ENCODE measurements at regions of chr12 and their contacts with region 1.

Region 1: DNA sequence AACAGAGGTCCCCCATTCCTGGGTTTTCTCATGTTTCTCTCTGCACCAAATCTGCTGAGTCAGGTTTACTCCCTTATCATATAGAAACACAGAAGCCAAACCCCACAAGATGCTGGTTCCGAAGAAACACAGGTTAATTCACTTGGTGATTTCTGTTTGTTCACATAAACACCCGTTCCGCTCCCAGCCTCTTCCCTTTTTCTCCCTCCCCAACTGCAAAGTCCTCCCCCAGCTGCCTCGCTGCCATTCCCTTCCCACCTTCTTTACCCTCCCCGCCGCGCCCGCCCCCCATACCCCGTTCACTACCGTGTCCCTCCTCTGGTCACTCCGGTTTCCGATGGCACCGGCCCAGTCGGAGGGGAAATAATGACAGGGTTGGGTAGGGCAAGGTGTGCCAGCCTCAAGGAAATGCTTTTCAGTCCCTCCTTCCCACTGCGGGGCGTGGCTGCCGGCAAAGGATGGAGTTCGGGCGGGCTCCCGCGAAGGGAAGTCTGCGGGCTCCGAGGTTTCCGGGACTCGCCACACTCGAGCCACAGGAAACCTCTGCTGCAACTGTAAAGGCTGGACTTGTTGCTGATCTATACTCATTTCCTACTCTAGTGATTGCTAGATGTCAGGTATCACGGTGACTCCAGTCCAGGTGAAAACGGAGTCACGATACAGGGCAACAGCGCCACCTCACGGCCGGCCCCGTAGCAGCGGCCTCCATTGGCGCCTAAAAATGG is at the start of gene STYK1:
- DNase-seq: peak; percentile 91
- H3K4me3 Mint-ChIP-seq: peak within 1 kb of the TSS; percentile 81
- H3K27ac Mint-ChIP-seq: peak within 1 kb of the TSS; percentile 70
- H3K4me1 Mint-ChIP-seq: peaks cover 35% of the 10 kb centered on the region
- H3K27me3 Mint-ChIP-seq: no peaks in the 10 kb centered on the region
- CTCF ChIP-seq: peak; percentile 93
- total RNA-seq, gene STYK1: 8.4 and 10.7 TPM in 2 replicates

Region 2: DNA sequence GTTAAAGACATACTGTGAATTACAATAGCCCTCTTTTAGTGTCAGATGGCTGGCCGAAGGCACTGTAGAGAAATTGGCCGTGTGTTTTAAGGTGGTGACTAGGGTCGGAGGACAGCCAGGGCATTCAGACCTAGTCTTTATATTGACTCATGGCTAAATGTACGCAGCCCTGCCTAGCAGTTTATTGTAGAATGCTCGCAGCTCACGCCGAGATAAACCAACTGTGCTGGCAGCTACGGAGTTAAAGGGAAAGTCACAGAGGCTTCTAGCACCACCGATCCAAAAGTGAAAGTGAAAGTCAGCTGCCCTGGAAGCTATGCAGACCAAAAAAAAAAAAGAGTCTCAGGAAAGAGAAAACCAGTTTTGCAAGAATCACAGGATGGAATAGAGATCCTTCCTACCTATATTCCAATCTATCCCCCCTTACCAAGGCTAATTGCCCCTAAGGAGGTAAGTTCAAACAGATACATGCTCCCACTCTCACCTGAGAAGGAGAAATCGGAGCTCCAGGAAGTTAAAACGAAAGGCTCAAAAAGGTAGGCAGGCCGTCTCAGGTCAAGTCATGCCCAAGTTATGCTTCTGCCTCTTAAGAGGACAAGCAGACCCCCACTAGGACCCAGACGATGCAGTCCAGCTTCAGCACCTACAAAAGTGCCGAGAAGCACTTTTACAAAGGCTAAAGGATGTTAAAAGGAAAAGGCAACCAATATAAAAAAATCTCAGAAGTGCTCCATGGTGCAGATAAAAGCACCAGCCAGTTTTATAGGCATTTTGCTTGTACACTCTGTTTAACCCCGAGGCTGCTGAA is 308.8 kb before region 1 on chr12:
- CTCF ChIA-PET with region 1: no interaction called
- intact Hi-C with region 1: loop called (anchors 10 kb)
- DNase-seq: peak; percentile 72
- H3K4me3 Mint-ChIP-seq: no peak overlapping the region
- H3K27ac Mint-ChIP-seq: no peak overlapping the region
- H3K4me1 Mint-ChIP-seq: peaks cover 49% of the 10 kb centered on the region
- H3K27me3 Mint-ChIP-seq: no peaks in the 10 kb centered on the region
- CTCF ChIP-seq: no peak

Region 3: GRCh38 chr12:10607885-10608458 is 65.8 kb before region 1 on chr12:
- CTCF ChIA-PET with region 1: no interaction called
- intact Hi-C with region 1: loop called (anchors 1 kb)
- DNase-seq: peak; percentile 10
- H3K4me3 Mint-ChIP-seq: no peak overlapping the region
- H3K27ac Mint-ChIP-seq: no peak overlapping the region
- H3K4me1 Mint-ChIP-seq: peaks cover 16% of the 10 kb centered on the region
- H3K27me3 Mint-ChIP-seq: no peaks in the 10 kb centered on the region
- CTCF ChIP-seq: peak; percentile 21

Region 4: GRCh38 chr12:10636611-10637010 is 37.2 kb before region 1 on chr12:
- CTCF ChIA-PET with region 1: no interaction called
- intact Hi-C with region 1: loop called (anchors 5 kb)
- DNase-seq: peak; percentile 12
- H3K4me3 Mint-ChIP-seq: no peak overlapping the region
- H3K27ac Mint-ChIP-seq: no peak overlapping the region
- H3K4me1 Mint-ChIP-seq: peaks cover 11% of the 10 kb centered on the region
- H3K27me3 Mint-ChIP-seq: no peaks in the 10 kb centered on the region
- CTCF ChIP-seq: no peak